ENCODE measurements at regions of chr19 and their contacts with region 1.

Region 1: GRCh38 chr19:9818734-9819589 is at the start of gene FBXL12:
- DNase-seq: peak; percentile 100
- H3K4me3 ChIP-seq: peak within 1 kb of the TSS; percentile 82 to 99 (median 92)
- H3K4me3 Mint-ChIP-seq: peak within 1 kb of the TSS; percentile 87 to 92
- H3K27ac ChIP-seq: peak within 1 kb of the TSS; percentile 96 to 99
- H3K27ac Mint-ChIP-seq: peak within 1 kb of the TSS; percentile 96 to 98 (median 97)
- H3K4me1 ChIP-seq: peaks cover 15 to 22% of the 10 kb centered on the region in 2 donors
- H3K4me1 Mint-ChIP-seq: peaks cover 20% of the 10 kb centered on the region
- H3K27me3 ChIP-seq: no peaks in the 10 kb centered on the region
- H3K27me3 Mint-ChIP-seq: no peaks in the 10 kb centered on the region
- CTCF ChIP-seq: no peak
- polyA plus RNA-seq, gene FBXL12: 6.6 to 49.8 (median 8.1) TPM

Region 2: DNA sequence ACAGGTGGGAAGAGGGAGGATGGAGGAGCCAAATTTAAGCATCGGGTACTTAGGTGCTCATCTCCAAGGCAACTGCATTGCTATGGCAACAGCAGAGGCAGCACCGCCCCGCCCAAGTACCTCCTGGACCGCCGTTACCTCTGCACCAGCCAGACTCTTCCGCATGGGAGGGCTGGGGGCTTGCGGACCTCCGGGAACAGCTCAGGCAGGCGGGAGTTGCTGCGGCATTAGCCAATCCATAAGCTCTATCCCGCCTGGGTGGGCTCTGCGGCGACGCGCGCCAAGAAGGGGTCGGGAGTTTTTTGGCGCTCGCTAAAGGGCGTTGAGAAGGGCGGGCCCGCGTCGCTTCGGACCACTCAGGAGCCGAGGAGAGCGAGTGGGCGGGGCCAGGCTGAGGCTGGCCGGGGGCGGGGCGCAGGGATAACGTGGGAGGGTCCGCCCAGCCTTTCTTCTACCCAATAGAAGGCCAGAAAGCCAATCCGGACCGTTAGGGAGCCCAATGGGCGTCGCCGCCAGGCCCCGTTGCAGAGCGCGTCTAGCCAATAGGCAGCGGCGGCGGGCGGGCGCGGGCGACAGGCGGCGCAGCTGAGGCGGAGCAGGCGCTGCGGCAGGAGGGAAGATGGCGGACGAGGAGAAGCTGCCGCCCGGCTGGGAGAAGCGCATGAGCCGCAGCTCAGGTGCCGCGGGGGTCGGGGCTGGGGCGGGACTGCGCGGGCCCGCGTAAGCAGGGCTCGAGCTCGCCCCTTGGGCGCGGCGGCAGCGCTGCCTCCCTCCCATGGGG is 16.0 kb after region 1 on chr19 and contains the start of gene PIN1:
- intact Hi-C with region 1: loop called in 1 of 2 experiments (anchors 1 kb)
- DNase-seq: peak; percentile 98 to 100 (median 99)
- H3K4me3 ChIP-seq: peak within 1 kb of the TSS; percentile 62 to 86 (median 64)
- H3K4me3 Mint-ChIP-seq: peak within 1 kb of the TSS; percentile 86 to 91
- H3K27ac ChIP-seq: peak within 1 kb of the TSS; percentile 3 to 71
- H3K27ac Mint-ChIP-seq: peak within 1 kb of the TSS; percentile 50 to 95 (median 87)
- H3K4me1 ChIP-seq: peaks cover 11 to 14% of the 10 kb centered on the region in 2 donors
- H3K4me1 Mint-ChIP-seq: peaks cover 12% of the 10 kb centered on the region
- H3K27me3 ChIP-seq: no peaks in the 10 kb centered on the region
- H3K27me3 Mint-ChIP-seq: peaks cover 0 to 2% (median 0%) of the 10 kb centered on the region in 3 donors
- CTCF ChIP-seq: peak; percentile 52
- polyA plus RNA-seq, gene PIN1: 67.4 to 79.8 (median 68.3) TPM